ENCODE measurements at regions of chr2 and their contacts with region 1.

Region 1: GRCh38 chr2:189798312-189799029 is 14.2 kb downstream of the PMS1 start:
- DNase-seq: no peak
- H3K4me3 Mint-ChIP-seq: no peak overlapping the region
- H3K27ac Mint-ChIP-seq: no peak overlapping the region
- H3K4me1 Mint-ChIP-seq: no peaks in the 10 kb centered on the region
- H3K27me3 Mint-ChIP-seq: no peaks in the 10 kb centered on the region

Region 2: GRCh38 chr2:189819297-189819704 is 20.8 kb after region 1 on chr2:
- intact Hi-C with region 1: loop called (anchors 2 kb)
- DNase-seq: no peak
- H3K4me3 Mint-ChIP-seq: no peak overlapping the region
- H3K27ac Mint-ChIP-seq: peak overlapping the region; percentile 29
- H3K4me1 Mint-ChIP-seq: peaks cover 16% of the 10 kb centered on the region
- H3K27me3 Mint-ChIP-seq: no peaks in the 10 kb centered on the region